ENCODE measurements at regions of chr1 and their contacts with region 1.

Region 1: DNA sequence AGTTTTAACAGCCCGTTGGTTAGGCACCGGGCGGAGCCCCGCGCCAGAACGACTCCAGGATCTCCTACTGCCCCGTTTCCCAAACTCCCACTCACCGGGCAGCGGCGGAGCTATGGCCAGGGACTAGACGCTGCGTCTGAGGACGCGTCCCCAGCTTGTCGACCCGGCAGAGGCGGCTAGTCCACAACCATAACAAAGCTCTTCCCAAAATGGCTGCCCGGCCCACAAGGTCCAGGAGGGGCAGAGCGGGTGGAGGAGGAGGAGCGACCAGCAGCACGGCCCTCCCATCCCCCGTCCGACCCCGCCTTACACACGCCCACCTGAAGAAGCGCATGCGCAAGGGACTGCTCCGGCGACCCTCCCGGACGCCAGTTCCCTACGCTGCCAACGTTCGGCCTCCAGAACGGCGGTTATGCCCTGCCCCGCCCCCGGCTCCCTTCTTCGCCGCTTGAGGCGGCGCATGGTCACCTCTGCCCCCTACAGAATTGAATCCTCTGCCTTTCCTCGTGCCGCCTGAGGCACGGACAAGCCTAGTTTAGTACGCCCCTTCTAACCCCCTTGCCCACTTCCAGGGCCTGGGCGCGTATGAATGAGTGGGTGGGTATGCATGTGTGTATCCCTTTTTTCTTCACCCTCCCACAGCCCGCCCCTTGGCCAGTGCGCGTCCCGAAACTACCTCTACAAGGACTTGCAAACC is at the start of gene GPBP1L1:
- DNase-seq: peak; percentile 97
- H3K4me3 ChIP-seq: peak within 1 kb of the TSS; percentile 94
- H3K27ac ChIP-seq: peak within 1 kb of the TSS; percentile 91
- H3K4me1 ChIP-seq: peaks cover 37% of the 10 kb centered on the region
- CTCF ChIP-seq: no peak
- total RNA-seq, gene GPBP1L1: 89.7 and 101 TPM in 2 replicates

Region 2: GRCh38 chr1:45444609-45445171 is 241.8 kb before region 1 on chr1:
- CTCF ChIA-PET with region 1: no interaction called
- POLR2A ChIA-PET with region 1: no interaction called
- intact Hi-C with region 1: no loop called
- DNase-seq: no peak
- H3K4me3 ChIP-seq: no peak overlapping the region
- H3K27ac ChIP-seq: no peak overlapping the region
- H3K4me1 ChIP-seq: no peaks in the 10 kb centered on the region
- CTCF ChIP-seq: no peak

Region 3: GRCh38 chr1:45521398-45522323 is 164.8 kb before region 1 on chr1 and contains the start of gene PRDX1:
- CTCF ChIA-PET with region 1: no interaction called
- POLR2A ChIA-PET with region 1: no interaction called
- intact Hi-C with region 1: loop called (anchors 10 kb)
- DNase-seq: peak; percentile 95
- H3K4me3 ChIP-seq: peak within 1 kb of the TSS; percentile 99
- H3K27ac ChIP-seq: peak within 1 kb of the TSS; percentile 90
- H3K4me1 ChIP-seq: peaks cover 43% of the 10 kb centered on the region
- CTCF ChIP-seq: peak; percentile 30; the same call in 1 of the 2 replicates
- total RNA-seq, gene PRDX1: 725 and 814 TPM in 2 replicates

Region 4: DNA sequence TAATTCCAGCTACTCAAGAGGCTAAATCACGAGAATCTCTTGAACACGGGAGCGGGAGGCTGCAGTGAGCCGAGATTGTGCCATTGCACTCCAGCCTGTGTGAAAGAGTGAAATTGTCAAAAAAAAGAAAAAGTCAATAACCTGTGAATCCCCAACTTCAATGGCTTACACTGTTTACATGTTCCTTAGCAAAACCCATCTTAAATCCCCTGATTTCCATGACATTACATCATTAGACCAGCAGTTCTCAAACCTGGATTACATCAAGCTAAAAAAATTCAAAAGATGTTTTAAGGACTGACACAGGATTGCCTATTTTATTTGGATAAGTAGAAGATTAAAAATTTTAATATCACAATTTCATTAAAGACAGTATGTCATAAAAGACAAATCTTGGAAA is 12.5 kb before region 1 on chr1:
- CTCF ChIA-PET with region 1: no interaction called
- POLR2A ChIA-PET with region 1: interaction called, 14 read pairs
- intact Hi-C with region 1: no loop called
- DNase-seq: no peak
- H3K4me3 ChIP-seq: no peak overlapping the region
- H3K27ac ChIP-seq: no peak overlapping the region
- H3K4me1 ChIP-seq: peaks cover 7% of the 10 kb centered on the region
- CTCF ChIP-seq: no peak

Region 5: DNA sequence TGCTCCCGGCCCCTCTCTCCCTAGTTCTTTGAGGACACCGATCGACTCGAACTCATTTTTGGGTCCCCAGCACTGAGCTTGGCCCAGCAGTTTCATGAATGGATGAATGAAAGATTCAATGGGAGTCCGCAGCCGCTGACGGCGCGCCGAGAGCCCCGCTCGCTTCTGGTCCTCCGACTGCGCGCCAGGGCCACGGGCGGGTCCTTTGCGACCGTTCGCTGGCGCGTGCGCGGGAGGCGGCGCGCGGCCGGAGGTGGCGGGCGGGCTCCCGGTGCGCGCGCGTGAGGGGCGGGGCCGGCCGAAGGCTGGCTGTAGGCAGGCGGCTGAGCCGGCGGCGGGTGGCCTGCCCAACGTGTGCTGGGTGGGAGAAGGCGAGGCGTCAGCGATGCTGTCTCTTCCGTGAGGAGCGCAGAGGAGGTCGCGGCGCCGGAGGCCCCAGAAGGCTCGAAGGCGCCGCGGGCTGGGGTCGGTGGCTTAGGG is 116.9 kb after region 1 on chr1 and contains the start of gene MAST2:
- CTCF ChIA-PET with region 1: no interaction called
- POLR2A ChIA-PET with region 1: interaction called, 3 read pairs
- intact Hi-C with region 1: loop called (anchors 5 kb)
- DNase-seq: peak; percentile 94
- H3K4me3 ChIP-seq: peak within 1 kb of the TSS; percentile 84
- H3K27ac ChIP-seq: peak within 1 kb of the TSS; percentile 53
- H3K4me1 ChIP-seq: peaks cover 21% of the 10 kb centered on the region
- CTCF ChIP-seq: no peak
- total RNA-seq, gene MAST2: 25.5 and 32.1 TPM in 2 replicates

Region 6: DNA sequence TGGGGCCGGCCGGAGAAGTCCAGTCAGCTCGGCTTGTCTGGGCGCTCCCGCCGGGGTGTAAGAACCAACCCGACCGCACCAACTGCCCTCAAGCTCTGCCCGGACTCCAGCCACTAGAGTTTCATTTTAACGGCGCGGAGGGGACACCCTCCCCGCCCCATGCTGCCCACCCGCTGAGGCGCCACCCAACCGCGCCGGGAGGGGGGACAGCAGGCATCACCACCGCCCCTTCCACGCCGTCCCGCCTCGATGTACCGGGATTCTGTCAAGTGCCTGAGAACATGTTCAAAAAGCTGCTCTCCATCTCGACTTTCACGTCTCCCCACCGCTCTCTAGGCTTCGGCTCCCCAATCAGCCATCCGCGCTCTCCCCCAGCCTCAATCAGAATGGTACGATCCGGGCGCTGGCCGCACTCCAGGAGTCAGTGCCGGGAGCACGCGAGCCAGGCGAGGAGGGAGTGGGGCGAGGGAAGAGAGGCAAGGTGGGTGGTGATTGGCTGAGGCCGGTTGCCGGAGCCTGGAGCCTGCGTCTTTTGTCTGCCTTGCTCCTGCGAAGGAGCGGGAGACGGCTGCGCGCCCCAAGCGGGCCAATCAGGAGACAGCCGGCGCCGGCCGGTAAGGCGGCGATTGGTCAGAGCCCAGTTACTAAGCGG is 446.2 kb after region 1 on chr1 and contains the start of gene PIK3R3:
- CTCF ChIA-PET with region 1: no interaction called
- POLR2A ChIA-PET with region 1: no interaction called
- intact Hi-C with region 1: loop called (anchors 2 kb)
- DNase-seq: peak; percentile 98
- H3K4me3 ChIP-seq: peak within 1 kb of the TSS; percentile 95
- H3K27ac ChIP-seq: peak within 1 kb of the TSS; percentile 73
- H3K4me1 ChIP-seq: peaks cover 26% of the 10 kb centered on the region
- CTCF ChIP-seq: no peak
- total RNA-seq, gene PIK3R3: 12.7 and 16.2 TPM in 2 replicates